ENCODE measurements at regions of chr1 and their contacts with region 1.

Region 1: DNA sequence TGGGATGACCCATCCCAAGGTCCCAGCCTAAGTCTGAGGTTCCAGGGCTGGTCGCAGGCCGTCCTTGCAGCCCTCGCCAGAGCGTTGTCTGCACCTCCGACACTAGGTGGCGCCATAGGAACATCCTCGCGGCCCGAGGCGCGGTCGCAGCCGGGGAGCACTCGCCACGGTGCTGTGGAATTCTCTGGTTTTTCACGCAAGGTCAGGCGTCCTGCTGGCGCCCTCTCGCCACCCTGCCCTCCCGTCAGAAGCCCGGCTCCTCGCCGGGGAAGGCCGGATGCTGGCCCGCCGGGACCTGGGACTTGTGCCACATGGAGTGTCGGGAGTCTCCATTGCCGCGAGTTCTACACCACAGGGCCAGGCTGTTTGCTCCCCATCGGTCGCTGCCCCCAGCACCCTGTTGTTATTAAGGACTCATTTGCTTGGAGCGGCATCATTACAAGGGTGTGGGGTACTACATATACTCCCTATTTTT is 196.8 kb upstream of the LMO4 start:
- DNase-seq: peak; percentile 82
- H3K4me3 ChIP-seq: peak overlapping the region; percentile 36
- H3K27ac ChIP-seq: peak overlapping the region; percentile 36
- H3K4me1 ChIP-seq: no peaks in the 10 kb centered on the region
- H3K27me3 ChIP-seq: no peaks in the 10 kb centered on the region
- CTCF ChIP-seq: peak; percentile 97

Region 2: GRCh38 chr1:87274851-87275250 is 143.0 kb after region 1 on chr1:
- CTCF ChIA-PET with region 1: no interaction called
- POLR2A ChIA-PET with region 1: no interaction called
- intact Hi-C with region 1: loop called (anchors 5 kb)
- DNase-seq: peak; percentile 12
- H3K4me3 ChIP-seq: no peak overlapping the region
- H3K27ac ChIP-seq: no peak overlapping the region
- H3K4me1 ChIP-seq: peaks cover 14% of the 10 kb centered on the region
- H3K27me3 ChIP-seq: peaks cover 5% of the 10 kb centered on the region
- CTCF ChIP-seq: no peak

Region 3: GRCh38 chr1:87292684-87293493 is 161.0 kb after region 1 on chr1:
- CTCF ChIA-PET with region 1: no interaction called
- POLR2A ChIA-PET with region 1: no interaction called
- intact Hi-C with region 1: no loop called
- DNase-seq: peak; percentile 79
- H3K4me3 ChIP-seq: no peak overlapping the region
- H3K27ac ChIP-seq: no peak overlapping the region
- H3K4me1 ChIP-seq: peaks cover 7% of the 10 kb centered on the region
- H3K27me3 ChIP-seq: no peaks in the 10 kb centered on the region
- CTCF ChIP-seq: peak; percentile 83